ENCODE measurements at regions of chr14 and their contacts with region 1.

Region 1: GRCh38 chr14:81220830-81221578 is at the start of gene GTF2A1:
- DNase-seq: peak; percentile 87 to 98 (median 95)
- ATAC-seq: peak; percentile 63
- H3K4me3 ChIP-seq: peak within 1 kb of the TSS; percentile 92
- H3K4me3 Mint-ChIP-seq: peak within 1 kb of the TSS; percentile 100
- H3K27ac ChIP-seq: peak within 1 kb of the TSS; percentile 97 to 98
- H3K27ac Mint-ChIP-seq: peak within 1 kb of the TSS; percentile 99
- H3K4me1 ChIP-seq: peaks cover 14% of the 10 kb centered on the region
- H3K4me1 Mint-ChIP-seq: peaks cover 46% of the 10 kb centered on the region
- H3K27me3 ChIP-seq: no peaks in the 10 kb centered on the region
- H3K27me3 Mint-ChIP-seq: peaks cover 9% of the 10 kb centered on the region
- CTCF ChIP-seq: no peak
- total RNA-seq, gene GTF2A1: 11.5 to 12.8 TPM

Region 2: DNA sequence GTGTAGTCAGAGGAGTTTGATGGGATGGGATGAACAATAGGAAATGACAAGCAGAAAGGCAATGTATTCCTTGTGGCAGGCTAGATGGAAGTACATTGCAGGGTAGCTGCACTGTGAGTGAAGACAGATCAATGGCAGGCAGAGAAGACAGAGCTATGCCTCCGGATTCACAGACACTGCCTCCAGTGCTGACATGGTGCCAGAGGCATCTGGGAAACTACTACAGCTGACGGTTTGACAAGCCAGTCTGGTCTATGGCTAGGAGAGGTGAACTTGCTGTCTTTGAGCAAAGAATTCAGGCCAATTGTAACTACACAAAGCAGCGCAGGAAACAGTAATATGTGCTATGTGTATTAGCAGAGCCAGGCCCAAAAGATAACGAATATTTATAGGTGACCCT is 1203.2 kb before region 1 on chr14:
- CTCF ChIA-PET with region 1: no interaction called
- POLR2A ChIA-PET with region 1: no interaction called
- intact Hi-C with region 1: no loop called
- DNase-seq: no peak
- ATAC-seq: no peak
- H3K4me3 ChIP-seq: no peak overlapping the region
- H3K4me3 Mint-ChIP-seq: no peak overlapping the region
- H3K27ac ChIP-seq: no peak overlapping the region
- H3K27ac Mint-ChIP-seq: no peak overlapping the region
- H3K4me1 ChIP-seq: no peaks in the 10 kb centered on the region
- H3K4me1 Mint-ChIP-seq: no peaks in the 10 kb centered on the region
- H3K27me3 ChIP-seq: no peaks in the 10 kb centered on the region
- H3K27me3 Mint-ChIP-seq: no peaks in the 10 kb centered on the region
- CTCF ChIP-seq: no peak

Region 3: DNA sequence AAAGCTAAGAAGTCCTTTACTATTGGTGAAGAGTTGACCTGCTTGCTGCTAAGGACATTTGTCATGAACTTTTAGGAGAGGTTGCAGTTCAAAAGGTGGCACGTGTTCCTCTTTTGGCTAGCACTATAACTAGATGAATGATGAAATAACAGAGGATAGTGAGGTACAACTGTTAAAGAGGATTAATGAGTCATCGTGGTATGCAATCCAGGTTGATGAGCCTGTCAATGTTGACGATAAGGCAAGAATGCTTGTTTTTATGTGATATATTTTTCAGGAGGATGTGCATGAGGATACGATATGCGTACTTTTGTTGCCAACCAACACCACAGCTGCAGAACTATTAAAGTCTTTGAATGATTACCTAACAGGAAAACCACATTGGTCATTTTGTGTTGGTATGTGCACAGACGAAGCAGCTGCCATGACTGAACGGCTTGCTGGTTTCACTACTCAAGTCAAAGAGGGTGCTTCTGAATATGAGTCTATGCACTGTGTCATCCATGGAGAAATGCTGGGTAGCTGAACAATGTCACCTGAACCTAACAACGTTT is 290.1 kb before region 1 on chr14:
- CTCF ChIA-PET with region 1: no interaction called
- POLR2A ChIA-PET with region 1: no interaction called
- intact Hi-C with region 1: loop called in 1 of 2 experiments (anchors 5 kb)
- DNase-seq: peak in 13 of 14 experiments; percentile 13 to 89 (median 38)
- ATAC-seq: peak; percentile 88
- H3K4me3 ChIP-seq: peak overlapping the region; percentile 9
- H3K4me3 Mint-ChIP-seq: peak overlapping the region; percentile 47
- H3K27ac ChIP-seq: peak overlapping the region in 1 of 2 donors; percentile 47
- H3K27ac Mint-ChIP-seq: peak overlapping the region; percentile 94
- H3K4me1 ChIP-seq: peaks cover 21% of the 10 kb centered on the region
- H3K4me1 Mint-ChIP-seq: peaks cover 62% of the 10 kb centered on the region
- H3K27me3 ChIP-seq: no peaks in the 10 kb centered on the region
- H3K27me3 Mint-ChIP-seq: no peaks in the 10 kb centered on the region
- CTCF ChIP-seq: no peak

Region 4: GRCh38 chr14:80954687-80955299 is 266.2 kb before region 1 on chr14:
- CTCF ChIA-PET with region 1: no interaction called
- POLR2A ChIA-PET with region 1: interaction called, 11 read pairs
- intact Hi-C with region 1: loop called in 1 of 2 experiments (anchors 5 kb)
- DNase-seq: peak; percentile 57 to 86 (median 68)
- ATAC-seq: peak; percentile 67
- H3K4me3 ChIP-seq: peak overlapping the region; percentile 72
- H3K4me3 Mint-ChIP-seq: peak overlapping the region; percentile 93
- H3K27ac ChIP-seq: no peak overlapping the region
- H3K27ac Mint-ChIP-seq: peak overlapping the region; percentile 29
- H3K4me1 ChIP-seq: peaks cover 15% of the 10 kb centered on the region
- H3K4me1 Mint-ChIP-seq: peaks cover 48% of the 10 kb centered on the region
- H3K27me3 ChIP-seq: no peaks in the 10 kb centered on the region
- H3K27me3 Mint-ChIP-seq: peaks cover 3% of the 10 kb centered on the region
- CTCF ChIP-seq: peak; percentile 90

Region 5: DNA sequence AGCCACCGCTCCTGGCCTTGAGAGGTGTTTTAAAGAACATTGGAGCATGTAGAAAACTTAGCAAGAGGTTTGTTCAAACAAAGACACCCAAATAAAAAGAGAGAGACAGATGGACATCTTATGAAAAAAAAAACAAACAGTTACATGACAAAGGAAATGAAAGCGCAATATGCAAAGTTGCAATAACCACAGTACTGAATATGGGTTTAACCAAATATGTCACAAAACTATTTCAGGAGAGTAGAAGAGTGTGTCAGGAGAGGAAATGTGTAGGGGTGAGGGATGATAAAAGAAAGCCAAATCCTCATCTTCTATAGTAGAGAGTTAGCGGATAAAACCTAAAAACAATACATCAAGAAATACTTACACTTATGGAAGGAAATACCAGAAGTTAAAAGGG is 98.7 kb before region 1 on chr14:
- CTCF ChIA-PET with region 1: no interaction called
- POLR2A ChIA-PET with region 1: no interaction called
- intact Hi-C with region 1: no loop called
- DNase-seq: no peak
- ATAC-seq: no peak
- H3K4me3 ChIP-seq: no peak overlapping the region
- H3K4me3 Mint-ChIP-seq: no peak overlapping the region
- H3K27ac ChIP-seq: no peak overlapping the region
- H3K27ac Mint-ChIP-seq: no peak overlapping the region
- H3K4me1 ChIP-seq: no peaks in the 10 kb centered on the region
- H3K4me1 Mint-ChIP-seq: no peaks in the 10 kb centered on the region
- H3K27me3 ChIP-seq: no peaks in the 10 kb centered on the region
- H3K27me3 Mint-ChIP-seq: no peaks in the 10 kb centered on the region
- CTCF ChIP-seq: no peak

Region 6: DNA sequence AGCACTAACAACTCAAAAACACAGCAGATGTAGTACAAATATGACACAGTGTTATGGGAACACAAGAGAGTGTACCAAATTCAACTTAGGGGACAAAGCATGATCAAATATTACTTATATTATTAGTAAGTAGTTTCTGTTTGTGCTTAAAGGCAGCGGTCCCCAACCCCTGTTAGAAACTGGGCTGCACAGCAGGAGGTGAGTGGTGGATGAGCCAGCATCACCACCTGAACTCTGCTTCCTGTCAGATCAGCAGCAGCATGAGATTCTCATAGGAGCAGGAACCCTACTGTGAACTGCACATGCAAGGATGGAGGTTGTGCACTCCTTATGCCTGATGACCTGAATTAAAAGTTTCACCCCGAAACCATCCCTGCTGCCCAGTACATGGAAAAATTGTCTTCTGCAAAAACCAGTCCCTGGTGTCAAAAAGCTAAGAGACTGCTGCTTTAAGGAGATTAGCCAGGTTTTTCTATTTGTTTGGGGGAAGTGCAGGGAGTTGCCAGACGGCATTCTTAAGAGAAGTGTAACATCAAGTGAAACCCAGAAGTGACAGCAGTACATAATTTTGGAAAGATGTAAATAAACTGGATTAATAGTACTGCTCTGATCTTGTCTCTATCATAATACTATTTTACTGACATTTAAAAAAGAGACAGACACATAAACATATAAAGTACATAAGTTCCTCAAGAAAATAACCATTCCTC is 26.9 kb before region 1 on chr14:
- CTCF ChIA-PET with region 1: no interaction called
- POLR2A ChIA-PET with region 1: interaction called, 12 read pairs
- intact Hi-C with region 1: loop called in 1 of 2 experiments (anchors 1 kb)
- DNase-seq: peak in 3 of 14 experiments; percentile 9 to 39 (median 14)
- ATAC-seq: no peak
- H3K4me3 ChIP-seq: no peak overlapping the region
- H3K4me3 Mint-ChIP-seq: no peak overlapping the region
- H3K27ac ChIP-seq: no peak overlapping the region
- H3K27ac Mint-ChIP-seq: peak overlapping the region; percentile 53
- H3K4me1 ChIP-seq: peaks cover 14% of the 10 kb centered on the region
- H3K4me1 Mint-ChIP-seq: peaks cover 58% of the 10 kb centered on the region
- H3K27me3 ChIP-seq: no peaks in the 10 kb centered on the region
- H3K27me3 Mint-ChIP-seq: no peaks in the 10 kb centered on the region
- CTCF ChIP-seq: no peak

Region 7: DNA sequence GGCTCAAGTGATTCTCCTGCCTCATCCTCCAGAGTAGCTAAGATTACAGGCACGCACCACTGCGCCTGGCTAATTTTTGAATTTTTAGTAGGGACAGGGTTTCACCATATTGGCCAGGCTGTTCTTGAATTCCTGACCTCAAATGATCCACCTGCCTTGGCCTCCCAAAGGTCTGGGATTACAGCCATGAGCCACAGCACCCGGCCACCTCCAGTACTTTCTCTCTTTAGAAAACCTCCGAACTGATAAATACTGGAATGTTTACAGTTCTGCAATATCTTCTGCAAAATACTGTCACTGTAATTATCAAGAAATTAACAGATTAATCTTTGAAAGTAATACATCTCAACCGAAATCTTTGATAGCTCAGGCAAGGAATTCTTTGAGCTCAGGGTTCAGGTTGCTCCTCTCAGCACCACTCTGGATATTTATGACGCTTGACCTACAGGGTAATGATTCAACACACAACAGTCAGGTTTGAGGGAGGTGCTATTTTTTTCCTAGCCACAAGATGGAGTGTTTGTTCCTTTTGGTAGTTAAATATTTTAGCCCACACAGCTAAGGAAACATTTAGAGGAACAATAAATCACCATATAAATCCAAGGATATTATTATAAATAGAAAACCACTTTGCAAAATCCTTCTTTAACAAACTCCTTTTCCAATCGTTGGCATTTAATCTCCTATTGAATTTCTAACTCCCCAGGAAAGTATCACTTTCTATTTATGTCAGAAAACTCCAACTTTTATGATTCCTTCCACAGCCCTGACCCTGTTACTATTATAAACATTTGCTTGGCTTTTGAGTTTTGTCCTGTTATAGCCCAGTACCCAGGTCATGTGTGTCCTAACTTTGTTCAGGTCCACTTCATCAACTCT is 48.3 kb after region 1 on chr14:
- CTCF ChIA-PET with region 1: no interaction called
- POLR2A ChIA-PET with region 1: interaction called, 15 read pairs
- intact Hi-C with region 1: loop called in 1 of 2 experiments (anchors 2 kb)
- DNase-seq: peak in 4 of 14 experiments; percentile 9 to 61 (median 55)
- ATAC-seq: peak; percentile 47
- H3K4me3 ChIP-seq: no peak overlapping the region
- H3K4me3 Mint-ChIP-seq: no peak overlapping the region
- H3K27ac ChIP-seq: no peak overlapping the region
- H3K27ac Mint-ChIP-seq: no peak overlapping the region
- H3K4me1 ChIP-seq: no peaks in the 10 kb centered on the region
- H3K4me1 Mint-ChIP-seq: peaks cover 27% of the 10 kb centered on the region
- H3K27me3 ChIP-seq: no peaks in the 10 kb centered on the region
- H3K27me3 Mint-ChIP-seq: peaks cover 7% of the 10 kb centered on the region
- CTCF ChIP-seq: peak; percentile 84

Region 8: GRCh38 chr14:81533536-81534343 is 312.7 kb after region 1 on chr14 and contains the start of gene SEL1L:
- CTCF ChIA-PET with region 1: no interaction called
- POLR2A ChIA-PET with region 1: interaction called, 34 read pairs
- intact Hi-C with region 1: loop called (anchors 2 to 5 kb)
- DNase-seq: peak; percentile 97 to 100 (median 99)
- ATAC-seq: peak; percentile 95
- H3K4me3 ChIP-seq: peak within 1 kb of the TSS; percentile 89
- H3K4me3 Mint-ChIP-seq: peak within 1 kb of the TSS; percentile 96
- H3K27ac ChIP-seq: peak within 1 kb of the TSS; percentile 62 to 64
- H3K27ac Mint-ChIP-seq: peak within 1 kb of the TSS; percentile 84
- H3K4me1 ChIP-seq: peaks cover 19% of the 10 kb centered on the region
- H3K4me1 Mint-ChIP-seq: peaks cover 70% of the 10 kb centered on the region
- H3K27me3 ChIP-seq: no peaks in the 10 kb centered on the region
- H3K27me3 Mint-ChIP-seq: no peaks in the 10 kb centered on the region
- CTCF ChIP-seq: no peak
- total RNA-seq, gene SEL1L: 40.6 to 46.4 TPM